Activated naive CD4-positive, alpha-beta T cell treated with anti-CD3 and anti-CD28 coated beads for 36 hours (primary cell): ENCODE measurements at regions of chr5 and their contacts with region 1.

Region 1: GRCh38 chr5:180126726-180127681 is 55.4 kb upstream of the RNF130 start:
- DNase-seq: peak; percentile 38
- H3K4me3 Mint-ChIP-seq: no peak overlapping the region
- H3K27ac Mint-ChIP-seq: no peak overlapping the region
- H3K4me1 Mint-ChIP-seq: no peaks in the 10 kb centered on the region
- H3K27me3 Mint-ChIP-seq: peaks cover 12% of the 10 kb centered on the region

Region 2: GRCh38 chr5:180026320-180026719 is 100.7 kb before region 1 on chr5:
- CTCF ChIA-PET with region 1: no interaction called
- intact Hi-C with region 1: no loop called
- DNase-seq: no peak
- H3K4me3 Mint-ChIP-seq: no peak overlapping the region
- H3K27ac Mint-ChIP-seq: no peak overlapping the region
- H3K4me1 Mint-ChIP-seq: no peaks in the 10 kb centered on the region
- H3K27me3 Mint-ChIP-seq: no peaks in the 10 kb centered on the region

Region 3: DNA sequence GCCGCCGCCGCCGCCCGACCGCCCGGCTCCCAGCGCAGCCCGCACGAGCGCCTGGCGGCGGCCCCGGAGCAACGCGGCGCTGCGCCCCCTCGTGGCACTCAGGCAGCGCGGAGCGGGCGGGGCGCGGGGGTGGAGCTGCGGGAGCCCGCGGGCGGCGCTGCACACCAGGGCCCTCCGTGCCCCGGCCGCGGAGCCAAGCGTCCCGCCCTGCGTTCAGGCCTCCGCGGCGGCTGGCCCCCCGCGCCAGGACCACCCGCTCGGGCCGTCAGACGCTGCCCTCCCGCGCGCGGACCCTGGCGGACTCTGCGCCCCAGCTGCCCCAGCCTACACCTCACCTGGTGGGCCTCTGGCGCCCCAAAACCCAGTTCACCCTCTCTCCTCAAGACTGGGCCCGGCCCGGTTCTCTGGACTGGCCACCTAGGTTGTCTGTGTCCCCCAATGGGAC is 82.2 kb after region 1 on chr5 and contains the start of gene RASGEF1C:
- CTCF ChIA-PET with region 1: interaction called, 8 read pairs
- intact Hi-C with region 1: loop called (anchors 5 kb)
- DNase-seq: peak; percentile 62
- H3K4me3 Mint-ChIP-seq: peak within 1 kb of the TSS; percentile 55
- H3K27ac Mint-ChIP-seq: no peak within 1 kb of the TSS
- H3K4me1 Mint-ChIP-seq: peaks cover 5% of the 10 kb centered on the region
- H3K27me3 Mint-ChIP-seq: peaks cover 36% of the 10 kb centered on the region
- total RNA-seq, gene RASGEF1C: not detected

Region 4: GRCh38 chr5:180315762-180316212 is 188.8 kb after region 1 on chr5:
- CTCF ChIA-PET with region 1: interaction called, 4 read pairs
- intact Hi-C with region 1: loop called (anchors 1 kb)
- DNase-seq: peak; percentile 81
- H3K4me3 Mint-ChIP-seq: no peak overlapping the region
- H3K27ac Mint-ChIP-seq: no peak overlapping the region
- H3K4me1 Mint-ChIP-seq: no peaks in the 10 kb centered on the region
- H3K27me3 Mint-ChIP-seq: no peaks in the 10 kb centered on the region

Region 5: DNA sequence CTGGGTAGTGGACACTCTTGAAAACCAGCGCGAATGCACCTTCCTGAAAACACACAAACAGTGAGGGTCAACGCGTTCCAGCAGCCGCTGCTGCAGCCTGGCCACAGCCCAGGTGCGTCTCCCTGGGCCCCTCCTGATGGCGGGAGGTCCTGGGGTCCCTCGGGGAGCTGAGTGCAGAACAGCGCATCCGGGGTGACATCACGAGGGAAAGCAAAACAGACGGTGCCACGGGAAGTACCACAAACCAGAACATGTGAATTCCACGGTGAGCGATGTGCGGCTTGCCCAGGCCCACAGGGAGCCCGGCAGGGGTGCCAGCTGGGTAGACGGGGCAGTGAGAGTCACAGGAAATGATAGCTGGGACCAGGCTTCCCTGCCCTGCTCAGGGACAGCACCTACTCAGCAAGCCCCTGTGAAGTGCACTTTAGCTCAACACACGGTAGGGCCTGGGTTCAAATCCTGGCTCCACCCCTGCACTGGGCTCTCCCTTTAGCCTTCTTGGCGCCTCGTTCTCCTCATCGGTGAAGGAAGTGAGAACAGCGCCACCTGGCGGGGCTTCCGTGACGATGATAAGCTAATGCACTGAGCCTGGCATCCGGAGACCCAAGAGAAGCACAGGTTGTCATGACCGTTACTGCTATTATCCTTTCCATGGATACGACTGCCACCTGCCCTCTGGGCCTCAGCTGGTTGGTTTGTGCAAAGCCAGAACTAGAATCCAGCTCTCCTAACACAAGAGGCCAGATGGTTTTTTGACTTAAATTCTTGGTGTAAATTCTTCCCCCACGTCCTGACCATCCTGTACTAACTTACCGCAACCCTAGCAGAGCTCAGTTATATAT is 201.5 kb after region 1 on chr5:
- CTCF ChIA-PET with region 1: interaction called, 4 read pairs
- intact Hi-C with region 1: loop called (anchors 1 kb)
- DNase-seq: peak; percentile 93
- H3K4me3 Mint-ChIP-seq: no peak overlapping the region
- H3K27ac Mint-ChIP-seq: no peak overlapping the region
- H3K4me1 Mint-ChIP-seq: no peaks in the 10 kb centered on the region
- H3K27me3 Mint-ChIP-seq: peaks cover 14% of the 10 kb centered on the region

Region 6: DNA sequence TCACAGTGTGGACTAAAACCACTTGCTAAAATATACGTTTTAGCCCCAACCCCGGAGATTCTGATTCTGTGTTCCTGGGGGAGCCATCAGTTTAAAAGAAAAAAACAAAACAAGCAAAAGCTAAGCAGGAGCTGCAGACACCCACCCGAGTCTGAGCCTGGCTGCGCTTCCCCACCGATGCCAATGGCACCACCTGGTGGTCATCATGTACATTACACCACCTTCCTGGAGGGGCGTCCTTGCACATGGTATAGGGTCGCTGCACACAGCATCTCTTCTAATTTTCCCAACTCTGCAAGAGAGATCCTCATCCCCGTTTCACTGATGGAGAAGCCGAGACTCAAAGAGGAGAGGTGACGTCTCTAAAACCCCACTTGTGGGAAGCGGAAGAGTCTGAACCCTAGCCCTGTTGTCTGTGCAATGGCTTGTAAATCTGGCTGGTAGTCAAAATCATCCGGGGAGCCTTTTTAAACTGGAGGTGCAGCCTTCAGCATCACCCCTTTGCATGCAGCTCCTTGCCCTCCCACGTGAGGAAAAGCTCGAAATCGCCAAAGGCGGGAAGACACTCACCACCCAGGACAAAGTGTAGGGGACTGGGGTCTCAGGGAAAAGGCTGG is 344.1 kb after region 1 on chr5:
- CTCF ChIA-PET with region 1: no interaction called
- intact Hi-C with region 1: loop called (anchors 5 kb)
- DNase-seq: peak; percentile 53
- H3K4me3 Mint-ChIP-seq: no peak overlapping the region
- H3K27ac Mint-ChIP-seq: no peak overlapping the region
- H3K4me1 Mint-ChIP-seq: no peaks in the 10 kb centered on the region
- H3K27me3 Mint-ChIP-seq: peaks cover 2% of the 10 kb centered on the region